GM10248 (cell line): ENCODE measurements at regions of chr11 and their contacts with region 1.

Region 1: GRCh38 chr11:12288212-12288930 is 89.0 kb upstream of the PARVA start:
- DNase-seq: peak; percentile 77
- CTCF ChIP-seq: peak; percentile 88

Region 2: GRCh38 chr11:12276356-12276755 is 12.0 kb before region 1 on chr11:
- CTCF ChIA-PET with region 1: interaction called, 42 read pairs
- POLR2A ChIA-PET with region 1: no interaction called
- DNase-seq: no peak
- CTCF ChIP-seq: no peak

Region 3: DNA sequence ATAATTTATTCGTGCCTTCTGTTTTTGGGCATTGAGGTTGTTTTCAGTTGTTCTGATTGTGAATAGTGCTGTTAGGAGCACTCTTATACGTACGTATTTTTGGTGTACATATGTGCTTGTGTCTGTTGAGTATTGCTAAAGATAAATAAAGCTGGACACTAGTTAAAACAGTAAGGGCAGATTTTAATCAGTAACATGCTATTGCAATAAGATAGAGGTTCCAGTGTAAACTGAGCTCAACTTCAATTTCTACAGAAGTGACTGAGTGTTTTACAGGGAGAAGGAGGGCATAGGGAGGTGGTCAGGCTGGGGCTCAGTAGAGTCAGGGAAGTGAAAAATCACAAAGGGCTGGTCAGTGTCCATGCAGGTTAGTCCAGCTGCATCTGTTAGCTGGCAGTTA is 13.0 kb after region 1 on chr11:
- CTCF ChIA-PET with region 1: interaction called, 10 read pairs
- POLR2A ChIA-PET with region 1: no interaction called
- DNase-seq: no peak
- CTCF ChIP-seq: no peak